ENCODE measurements at regions of chr2 and their contacts with region 1.

Region 1: GRCh38 chr2:84486441-84487115 is 27.5 kb upstream of the SUCLG1 start:
- ATAC-seq: peak in 3 of 8 experiments; percentile 32 to 87 (median 65)
- H3K4me3 ChIP-seq: no peak overlapping the region
- H3K27ac ChIP-seq: peak overlapping the region in 1 of 2 donors; percentile 75
- H3K4me1 ChIP-seq: peaks cover 0 to 15% of the 10 kb centered on the region in 2 donors

Region 2: DNA sequence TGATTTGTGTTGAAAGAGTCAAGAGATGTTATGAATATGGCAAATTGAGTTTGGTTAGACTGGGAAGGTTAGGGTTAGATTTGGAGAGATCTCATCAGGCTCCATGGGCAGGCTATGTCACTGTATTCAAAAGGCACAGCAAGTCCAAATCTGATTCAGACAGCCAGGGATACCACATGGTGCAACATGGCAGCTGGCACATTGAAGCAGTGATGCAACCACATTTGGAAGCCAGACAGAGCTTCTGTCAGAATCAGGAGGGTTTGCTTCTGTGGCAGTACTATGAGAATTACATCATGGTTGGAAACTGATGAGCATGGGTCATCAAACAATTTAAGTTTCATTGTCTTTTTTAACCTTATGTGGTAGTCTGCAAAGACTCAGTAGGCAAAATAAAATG is 799.7 kb before region 1 on chr2:
- in situ Hi-C with region 1: no loop called
- ATAC-seq: peak in 4 of 8 experiments; percentile 13 to 60 (median 38)
- H3K4me3 ChIP-seq: no peak overlapping the region
- H3K27ac ChIP-seq: no peak overlapping the region
- H3K4me1 ChIP-seq: peaks cover 0 to 4% of the 10 kb centered on the region in 2 donors

Region 3: DNA sequence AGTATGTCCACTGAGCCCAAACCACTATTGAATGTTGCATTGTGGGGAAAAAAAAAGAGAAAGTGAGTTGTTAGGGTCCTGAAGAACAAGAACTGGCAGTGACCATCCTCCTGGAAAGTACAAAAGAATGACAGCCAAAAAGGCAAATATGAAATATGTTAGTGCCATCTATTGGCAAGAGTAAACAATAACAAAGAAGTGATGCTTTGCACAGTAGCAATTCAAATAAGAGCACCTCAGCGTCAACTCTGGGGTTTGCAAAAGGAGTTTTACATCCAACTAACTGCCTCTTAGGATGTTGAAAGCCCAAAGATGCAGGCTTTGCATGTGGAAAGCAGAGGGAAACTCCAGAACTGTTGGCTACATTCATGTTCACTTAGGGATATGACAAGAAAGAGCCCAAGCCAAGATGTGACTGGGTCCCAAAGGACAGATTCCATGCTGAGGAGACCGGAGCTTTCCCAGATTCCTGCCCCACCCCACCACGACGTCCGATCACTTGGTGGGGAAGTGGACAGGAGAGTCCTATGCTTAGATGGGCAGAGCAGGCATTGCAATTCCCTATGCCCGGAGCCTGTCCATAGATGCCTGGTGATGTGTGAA is 378.7 kb after region 1 on chr2:
- in situ Hi-C with region 1: loop called in 3 of 9 experiments (anchors 10 to 25 kb)
- ATAC-seq: peak in 3 of 8 experiments; percentile 44 to 63 (median 50)
- H3K4me3 ChIP-seq: no peak overlapping the region
- H3K27ac ChIP-seq: no peak overlapping the region
- H3K4me1 ChIP-seq: no peaks in the 10 kb centered on the region

Measured in motor neuron (in vitro differentiated cells).